Dendritic cell treated with granulocyte-macrophage colony-stimulating factor and Interleukin-4, amounts not matched to agents 40 ng/mL and 50 ng/mL, for 4 days (primary cell): ENCODE measurements at regions of chr22 and their contacts with region 1.

Region 1: DNA sequence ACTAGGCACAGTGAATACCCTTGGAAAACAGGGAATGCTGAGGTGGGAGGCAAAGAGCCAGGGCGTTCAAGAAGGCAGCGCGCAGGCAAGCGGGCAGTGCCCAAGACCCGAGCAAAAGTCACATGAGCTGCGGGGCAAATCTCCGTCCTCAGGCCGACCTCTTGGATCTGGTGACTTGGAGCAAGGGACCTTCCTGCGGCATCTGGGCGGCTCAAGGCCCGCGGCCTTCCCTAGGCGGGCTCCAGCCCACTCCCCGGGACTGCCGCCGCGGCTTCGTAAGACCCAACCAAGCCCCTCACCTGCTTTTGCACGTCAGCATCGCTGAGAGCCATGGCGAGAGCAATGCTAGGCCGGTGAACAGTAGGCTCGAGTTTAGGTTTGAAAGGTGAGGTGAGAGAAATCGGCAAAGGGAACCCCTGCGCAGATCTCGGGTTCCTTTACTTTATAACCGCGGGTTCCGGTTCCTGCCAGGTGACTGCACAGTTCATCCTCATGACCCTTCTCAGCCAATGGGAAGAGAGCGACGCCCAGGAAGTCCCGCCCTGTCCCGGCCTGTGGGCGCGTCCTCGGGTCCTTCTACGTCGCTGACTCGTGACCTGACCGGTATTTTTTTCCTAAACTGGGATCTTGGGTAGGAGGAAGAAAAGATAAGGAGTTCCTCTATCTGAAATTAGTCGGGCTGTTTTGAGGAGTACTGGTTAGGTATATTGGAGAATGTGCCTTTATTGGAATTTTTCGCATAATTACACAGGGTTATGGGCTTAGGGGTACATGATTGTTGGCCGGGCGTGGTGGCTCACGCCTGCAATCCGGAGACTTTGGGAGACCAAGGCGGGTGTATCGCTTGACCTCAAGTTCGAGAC is at the start of gene ATP6V1E1:
- H3K4me3 Mint-ChIP-seq: peak within 1 kb of the TSS; percentile 88
- H3K27ac Mint-ChIP-seq: peak within 1 kb of the TSS; percentile 95
- H3K4me1 Mint-ChIP-seq: peaks cover 31% of the 10 kb centered on the region
- H3K27me3 Mint-ChIP-seq: no peaks in the 10 kb centered on the region

Region 2: DNA sequence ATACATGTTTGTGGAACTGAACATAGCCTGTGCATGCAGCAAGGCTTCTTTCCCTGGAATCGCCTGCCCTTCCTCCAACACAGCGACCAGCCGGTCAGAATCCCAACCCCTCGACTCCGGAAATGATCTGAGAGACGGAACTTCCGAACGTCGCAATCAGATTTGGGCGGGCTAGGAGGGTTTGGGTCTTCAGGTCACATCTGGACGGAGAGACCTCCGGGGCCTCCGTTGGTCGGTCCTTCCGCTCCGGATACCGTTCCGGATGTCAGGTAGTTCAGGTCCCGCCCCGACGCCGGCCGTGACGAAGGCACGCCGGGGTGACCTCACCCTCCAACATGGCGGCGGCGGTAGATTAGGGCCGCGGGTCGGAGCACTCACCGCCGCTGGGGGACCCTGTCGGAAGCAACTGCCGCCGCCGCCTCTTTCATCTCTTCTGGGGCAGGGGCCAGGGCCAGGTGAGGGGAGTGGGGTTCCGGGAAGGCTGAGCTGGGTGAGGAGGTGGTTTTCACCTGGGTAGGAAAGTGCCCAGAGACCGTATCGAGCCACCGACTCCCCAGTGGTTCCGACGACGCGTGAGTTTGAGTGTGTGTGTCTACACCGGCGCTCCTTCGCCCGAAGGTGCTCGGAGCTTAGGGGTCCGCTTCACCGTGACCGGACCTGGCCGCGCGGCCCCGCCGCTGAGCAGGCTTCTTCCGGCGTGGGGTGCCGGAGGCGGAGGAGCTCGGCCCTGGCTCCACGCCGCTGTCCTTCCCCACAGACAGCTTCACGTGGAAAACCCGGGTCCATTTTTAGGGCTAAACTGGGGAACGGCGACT is 10.1 kb after region 1 on chr22 and contains the start of gene BCL2L13:
- intact Hi-C with region 1: loop called (anchors 1 kb)
- H3K4me3 Mint-ChIP-seq: peak within 1 kb of the TSS; percentile 85
- H3K27ac Mint-ChIP-seq: peak within 1 kb of the TSS; percentile 98
- H3K4me1 Mint-ChIP-seq: peaks cover 33% of the 10 kb centered on the region
- H3K27me3 Mint-ChIP-seq: no peaks in the 10 kb centered on the region

Region 3: DNA sequence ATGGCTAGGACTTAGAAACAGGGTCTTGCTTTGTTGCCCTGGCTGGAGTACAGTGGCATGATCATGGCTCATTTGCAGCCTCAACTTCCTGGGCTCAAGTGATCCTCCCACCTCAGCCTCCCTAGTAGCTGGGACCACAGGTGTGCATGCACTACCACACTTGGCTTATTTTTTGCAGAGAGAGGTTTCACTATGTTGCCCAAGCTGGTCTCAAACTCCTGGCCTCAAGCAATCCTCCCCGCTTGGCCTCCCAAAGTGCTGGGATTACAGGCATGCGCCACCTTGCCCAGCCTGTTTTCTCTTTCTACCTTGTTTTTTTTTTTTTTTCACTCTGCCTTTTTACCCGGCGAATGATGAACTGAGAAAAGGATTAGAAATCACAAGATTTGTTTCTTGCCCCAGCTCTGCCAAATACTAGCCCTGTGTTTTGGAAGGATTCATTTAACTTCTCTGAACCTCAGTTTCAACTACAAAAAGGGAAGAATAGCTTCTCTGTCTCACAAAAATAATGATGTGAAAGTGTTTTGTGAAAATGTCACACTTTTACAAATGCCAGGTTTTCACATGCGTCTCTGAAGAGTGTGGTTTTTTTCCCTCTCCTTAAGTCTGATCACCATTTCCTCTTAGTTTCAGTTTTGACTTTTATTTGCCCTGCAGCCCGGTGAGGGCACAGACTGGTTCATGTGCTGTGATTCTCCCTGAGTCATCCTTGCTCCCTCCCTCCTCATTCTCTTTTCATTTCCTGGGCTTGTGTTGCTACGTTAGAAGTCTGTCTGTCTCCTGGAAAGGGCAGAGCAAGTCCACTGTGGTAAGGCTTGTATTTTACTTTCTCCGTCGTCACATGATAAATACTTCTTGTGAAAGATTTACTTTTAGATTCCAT is 77.7 kb after region 1 on chr22:
- intact Hi-C with region 1: loop called (anchors 5 kb)
- H3K4me3 Mint-ChIP-seq: peak overlapping the region; percentile 78
- H3K27ac Mint-ChIP-seq: peak overlapping the region; percentile 96
- H3K4me1 Mint-ChIP-seq: peaks cover 15% of the 10 kb centered on the region
- H3K27me3 Mint-ChIP-seq: no peaks in the 10 kb centered on the region